H1 (cell line): ENCODE measurements at regions of chr7 and their contacts with region 1.

Region 1: GRCh38 chr7:134986363-134987251 is at the start of gene AGBL3:
- DNase-seq: peak; percentile 86 to 94
- H3K4me3 ChIP-seq: peak within 1 kb of the TSS; percentile 66 to 90 (median 82)
- H3K27ac ChIP-seq: peak within 1 kb of the TSS; percentile 87
- H3K4me1 ChIP-seq: no peaks in the 10 kb centered on the region
- H3K27me3 ChIP-seq: no peaks in the 10 kb centered on the region
- CTCF ChIP-seq: peak; percentile 37 to 49 (median 45)
- EP300 ChIP-seq: no peak; a peak in 1 of 3 replicates
- POLR2A ChIP-seq: peak; percentile 21 to 81; a peak in 2 of 3 replicates
- RAD21 ChIP-seq: 0 out of 4 replicates have a peak, but pooled peaks of 1 of the 2 experiments have one; percentile 8
- total RNA-seq, gene AGBL3: 1.9 and 2.0 TPM in 2 replicates

Region 2: DNA sequence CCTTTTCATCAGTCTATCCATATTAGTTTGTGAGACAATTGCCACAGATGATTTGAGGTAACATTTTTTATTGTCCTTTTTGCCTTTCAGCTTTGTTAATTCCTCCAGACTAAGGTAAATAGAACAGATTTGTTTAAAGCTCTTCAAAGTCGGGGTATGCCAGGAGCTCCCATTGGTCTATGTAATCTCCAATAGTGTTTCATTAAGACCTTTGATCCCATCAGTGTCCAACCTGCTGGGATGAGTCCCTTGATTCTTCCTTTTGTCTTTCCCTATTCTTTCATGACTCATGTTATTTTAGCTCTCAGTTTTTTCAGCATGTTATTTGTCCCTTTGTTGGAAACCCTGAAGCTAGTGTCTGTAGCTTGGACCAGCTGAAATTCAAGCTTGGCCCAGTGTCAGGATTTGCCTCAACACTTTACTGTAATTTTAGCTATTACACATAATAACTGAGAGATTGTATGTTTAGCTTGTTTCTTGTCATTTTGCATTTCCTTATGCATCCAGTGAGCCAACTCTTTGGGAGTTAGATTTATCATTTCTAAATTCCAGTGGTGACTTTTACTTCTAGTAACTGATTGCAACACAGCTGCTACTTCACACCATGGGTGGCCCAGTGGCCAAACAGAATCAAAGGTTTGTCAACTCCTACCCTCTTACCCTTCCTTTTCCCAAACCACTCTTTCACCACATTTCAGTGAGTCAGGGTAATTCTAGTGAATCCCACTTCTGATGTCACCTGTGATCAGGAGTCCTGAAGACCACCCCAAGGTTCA is 15.0 kb after region 1 on chr7:
- CTCF ChIA-PET with region 1: interaction called, 5 read pairs
- POLR2A ChIA-PET with region 1: interaction called, 11 read pairs
- DNase-seq: no peak
- H3K4me3 ChIP-seq: no peak overlapping the region
- H3K27ac ChIP-seq: no peak overlapping the region
- H3K4me1 ChIP-seq: no peaks in the 10 kb centered on the region
- H3K27me3 ChIP-seq: no peaks in the 10 kb centered on the region; a peak in 1 of 7 replicates
- CTCF ChIP-seq: no peak
- EP300 ChIP-seq: no peak
- POLR2A ChIP-seq: no peak
- RAD21 ChIP-seq: no peak

Region 3: DNA sequence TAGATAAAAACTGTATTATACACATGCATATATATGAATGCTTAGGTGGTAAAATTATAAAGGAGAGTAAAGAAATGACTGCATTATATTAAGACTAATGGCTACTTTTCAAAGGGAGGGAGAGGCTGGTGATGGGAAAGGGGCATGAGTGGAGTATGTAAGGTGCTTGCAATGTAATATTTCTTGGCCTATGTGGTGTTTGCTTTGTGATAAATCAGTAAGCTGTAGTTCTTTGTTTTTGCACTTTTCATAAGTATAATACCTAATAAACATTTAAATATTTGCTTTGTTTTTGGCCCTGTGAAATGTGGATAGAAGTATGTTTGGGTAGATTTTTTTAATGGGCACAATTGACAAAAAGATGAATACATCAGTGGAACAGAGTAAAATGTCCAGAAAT is 25.6 kb after region 1 on chr7:
- CTCF ChIA-PET with region 1: no interaction called
- POLR2A ChIA-PET with region 1: no interaction called
- DNase-seq: no peak
- H3K4me3 ChIP-seq: no peak overlapping the region
- H3K27ac ChIP-seq: no peak overlapping the region
- H3K4me1 ChIP-seq: no peaks in the 10 kb centered on the region
- H3K27me3 ChIP-seq: no peaks in the 10 kb centered on the region
- CTCF ChIP-seq: no peak
- EP300 ChIP-seq: no peak
- POLR2A ChIP-seq: no peak
- RAD21 ChIP-seq: no peak

Region 4: GRCh38 chr7:135170274-135170997 is 183.8 kb after region 1 on chr7 and contains the start of gene CYREN:
- CTCF ChIA-PET with region 1: interaction called, 10 read pairs
- POLR2A ChIA-PET with region 1: interaction called, 13 read pairs
- DNase-seq: peak; percentile 78 to 87
- H3K4me3 ChIP-seq: peak within 1 kb of the TSS; percentile 60 to 81 (median 72)
- H3K27ac ChIP-seq: peak within 1 kb of the TSS; percentile 89
- H3K4me1 ChIP-seq: peaks cover 1 to 16% (median 3%) of the 10 kb centered on the region in 4 experiments; a peak in 4 of 7 replicates
- H3K27me3 ChIP-seq: no peaks in the 10 kb centered on the region
- CTCF ChIP-seq: peak in 2 of 3 experiments; percentile 13 to 43; a peak in 3 of 4 replicates
- EP300 ChIP-seq: peak in 1 of 2 experiments; percentile 56; a peak in 1 of 3 replicates
- POLR2A ChIP-seq: peak; percentile 50 to 84
- RAD21 ChIP-seq: peak; percentile 26 to 53; a peak in 3 of 4 replicates
- total RNA-seq, gene CYREN: 46.0 and 46.2 TPM in 2 replicates